Tibial artery (tissue), 4 donors: ENCODE measurements at regions of chr1 and their contacts with region 1.

Region 1: DNA sequence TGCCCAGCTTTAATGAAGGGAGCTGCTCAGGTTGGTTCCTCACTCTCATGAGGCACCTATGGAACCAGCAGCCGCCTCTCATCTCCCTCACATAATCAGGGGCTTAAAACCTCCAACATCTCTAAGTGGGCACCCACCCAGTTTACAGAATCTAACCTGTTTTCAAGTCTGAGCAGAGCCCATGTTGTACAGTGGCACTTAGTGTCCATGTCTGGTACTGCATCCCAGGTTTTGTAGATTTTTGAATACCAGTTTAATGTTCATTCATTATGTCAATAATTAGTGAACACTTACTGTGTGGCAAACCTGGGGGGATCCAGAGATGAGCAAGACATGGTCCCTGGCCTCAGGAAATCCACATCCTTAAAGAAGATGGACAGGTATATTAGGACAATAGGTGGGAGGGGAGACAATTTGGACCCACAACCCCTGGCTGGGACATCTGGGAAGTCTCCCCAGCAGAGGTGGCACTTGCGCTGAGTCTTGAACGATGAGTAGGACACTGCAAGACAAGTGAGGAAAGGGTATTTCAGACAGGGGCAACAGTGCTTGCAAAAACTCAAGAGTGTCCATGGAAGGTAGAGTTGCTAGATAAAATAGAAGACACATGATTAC is 83.3 kb downstream of the LACTBL1 start:
- DNase-seq: no peak
- H3K4me3 ChIP-seq: no peak overlapping the region
- H3K27ac ChIP-seq: no peak overlapping the region
- H3K4me1 ChIP-seq: no peaks in the 10 kb centered on the region
- H3K27me3 ChIP-seq: peaks cover 0 to 17% of the 10 kb centered on the region in 2 donors
- CTCF ChIP-seq: peak; percentile 52 to 61

Region 2: DNA sequence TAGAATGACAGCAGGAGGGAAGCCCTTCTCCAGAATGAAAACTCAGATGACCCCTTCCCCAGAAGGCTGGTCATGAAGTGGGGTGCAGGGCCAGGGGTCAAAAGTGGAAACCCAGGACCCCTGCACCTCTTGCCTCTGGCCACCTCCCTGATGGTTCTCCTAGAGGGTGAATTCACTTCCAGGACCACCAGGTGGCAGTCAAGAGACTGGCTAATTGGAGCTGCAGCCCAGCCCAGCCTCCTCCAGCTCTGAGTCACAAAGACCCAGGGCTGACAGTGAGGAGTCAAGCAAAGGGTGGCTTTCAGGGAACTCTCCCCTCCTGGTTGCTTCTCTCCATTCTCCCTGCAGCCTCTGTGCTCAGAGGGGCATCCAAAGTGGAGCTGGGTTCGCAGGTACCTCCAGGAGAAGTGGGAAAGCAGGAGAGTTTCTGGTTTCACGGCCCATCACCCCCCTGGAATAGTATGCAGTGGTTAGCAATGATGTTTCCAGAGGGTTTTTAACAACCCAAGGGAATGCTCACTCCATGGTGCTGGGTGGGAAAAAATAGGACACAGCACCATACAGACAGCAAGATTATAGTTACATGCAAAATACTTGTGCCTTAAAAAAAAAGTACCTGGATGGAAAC is 184.8 kb before region 1 on chr1:
- intact Hi-C with region 1: loop called (anchors 10 kb)
- DNase-seq: peak; percentile 86 to 92
- H3K4me3 ChIP-seq: no peak overlapping the region
- H3K27ac ChIP-seq: no peak overlapping the region
- H3K4me1 ChIP-seq: peaks cover 0 to 3% (median under 1%) of the 10 kb centered on the region in 4 donors
- H3K27me3 ChIP-seq: peaks cover 0 to 8% of the 10 kb centered on the region in 2 donors
- CTCF ChIP-seq: peak; percentile 91 to 93